Activated CD4-positive, alpha-beta memory T cell treated with anti-CD3 and anti-CD28 coated beads, Interleukin-2, amount 10 ng/mL, durations not matched to agents 7 days and 5 days (primary cell): ENCODE measurements at regions of chr1 and their contacts with region 1.

Region 1: DNA sequence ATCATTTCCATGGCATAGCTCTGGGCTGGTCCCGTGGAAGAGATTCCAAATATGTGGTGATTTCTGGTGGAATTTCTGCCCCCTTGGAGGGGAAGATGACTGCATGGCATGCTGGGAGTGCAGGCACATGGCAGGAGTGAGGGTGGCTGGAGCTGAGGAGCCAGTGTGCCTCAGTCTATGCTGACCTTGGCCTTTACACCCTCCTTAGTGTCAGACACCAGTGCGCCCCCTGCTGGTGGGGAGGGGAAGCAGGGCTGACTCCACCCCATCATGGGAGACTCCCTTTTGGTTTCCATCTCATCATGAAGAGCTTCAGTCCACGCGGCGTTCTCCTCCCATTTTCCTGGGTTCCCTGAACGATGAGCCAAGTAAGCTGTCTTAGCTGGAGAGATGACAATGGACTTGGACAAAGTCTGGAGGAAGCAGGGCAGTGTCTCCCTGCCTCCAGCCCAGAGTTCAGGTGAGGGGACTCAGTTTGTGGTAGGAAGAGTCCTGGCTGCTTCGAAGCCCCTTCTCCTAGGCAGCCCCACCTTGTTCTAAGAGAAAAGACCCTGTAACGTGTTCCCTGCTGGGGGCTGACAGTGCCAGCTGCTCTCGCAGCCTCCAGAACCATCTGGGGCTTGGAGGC is 10.3 kb downstream of the ALX3 start:
- DNase-seq: peak; percentile 78
- H3K4me3 Mint-ChIP-seq: no peak overlapping the region
- H3K27ac Mint-ChIP-seq: no peak overlapping the region
- H3K4me1 Mint-ChIP-seq: peaks cover 4% of the 10 kb centered on the region
- H3K27me3 Mint-ChIP-seq: no peaks in the 10 kb centered on the region

Region 2: GRCh38 chr1:109931189-109931731 is 128.9 kb before region 1 on chr1:
- CTCF ChIA-PET with region 1: no interaction called
- POLR2A ChIA-PET with region 1: no interaction called
- DNase-seq: no peak
- H3K4me3 Mint-ChIP-seq: no peak overlapping the region
- H3K27ac Mint-ChIP-seq: no peak overlapping the region
- H3K4me1 Mint-ChIP-seq: peaks cover 24% of the 10 kb centered on the region
- H3K27me3 Mint-ChIP-seq: peaks cover 9% of the 10 kb centered on the region

Region 3: GRCh38 chr1:109991400-109991925 is 68.7 kb before region 1 on chr1:
- CTCF ChIA-PET with region 1: no interaction called
- POLR2A ChIA-PET with region 1: no interaction called
- DNase-seq: no peak
- H3K4me3 Mint-ChIP-seq: no peak overlapping the region
- H3K27ac Mint-ChIP-seq: no peak overlapping the region
- H3K4me1 Mint-ChIP-seq: peaks cover 32% of the 10 kb centered on the region
- H3K27me3 Mint-ChIP-seq: no peaks in the 10 kb centered on the region

Region 4: GRCh38 chr1:110040548-110040947 is 19.6 kb before region 1 on chr1:
- CTCF ChIA-PET with region 1: interaction called, 18 read pairs
- POLR2A ChIA-PET with region 1: interaction called, 6 read pairs
- DNase-seq: no peak
- H3K4me3 Mint-ChIP-seq: no peak overlapping the region
- H3K27ac Mint-ChIP-seq: no peak overlapping the region
- H3K4me1 Mint-ChIP-seq: peaks cover 17% of the 10 kb centered on the region
- H3K27me3 Mint-ChIP-seq: no peaks in the 10 kb centered on the region

Region 5: GRCh38 chr1:110076789-110077500 is 16.8 kb after region 1 on chr1:
- CTCF ChIA-PET with region 1: interaction called, 16 read pairs
- POLR2A ChIA-PET with region 1: no interaction called
- DNase-seq: no peak
- H3K4me3 Mint-ChIP-seq: no peak overlapping the region
- H3K27ac Mint-ChIP-seq: no peak overlapping the region
- H3K4me1 Mint-ChIP-seq: no peaks in the 10 kb centered on the region
- H3K27me3 Mint-ChIP-seq: peaks cover 38% of the 10 kb centered on the region

Region 6: DNA sequence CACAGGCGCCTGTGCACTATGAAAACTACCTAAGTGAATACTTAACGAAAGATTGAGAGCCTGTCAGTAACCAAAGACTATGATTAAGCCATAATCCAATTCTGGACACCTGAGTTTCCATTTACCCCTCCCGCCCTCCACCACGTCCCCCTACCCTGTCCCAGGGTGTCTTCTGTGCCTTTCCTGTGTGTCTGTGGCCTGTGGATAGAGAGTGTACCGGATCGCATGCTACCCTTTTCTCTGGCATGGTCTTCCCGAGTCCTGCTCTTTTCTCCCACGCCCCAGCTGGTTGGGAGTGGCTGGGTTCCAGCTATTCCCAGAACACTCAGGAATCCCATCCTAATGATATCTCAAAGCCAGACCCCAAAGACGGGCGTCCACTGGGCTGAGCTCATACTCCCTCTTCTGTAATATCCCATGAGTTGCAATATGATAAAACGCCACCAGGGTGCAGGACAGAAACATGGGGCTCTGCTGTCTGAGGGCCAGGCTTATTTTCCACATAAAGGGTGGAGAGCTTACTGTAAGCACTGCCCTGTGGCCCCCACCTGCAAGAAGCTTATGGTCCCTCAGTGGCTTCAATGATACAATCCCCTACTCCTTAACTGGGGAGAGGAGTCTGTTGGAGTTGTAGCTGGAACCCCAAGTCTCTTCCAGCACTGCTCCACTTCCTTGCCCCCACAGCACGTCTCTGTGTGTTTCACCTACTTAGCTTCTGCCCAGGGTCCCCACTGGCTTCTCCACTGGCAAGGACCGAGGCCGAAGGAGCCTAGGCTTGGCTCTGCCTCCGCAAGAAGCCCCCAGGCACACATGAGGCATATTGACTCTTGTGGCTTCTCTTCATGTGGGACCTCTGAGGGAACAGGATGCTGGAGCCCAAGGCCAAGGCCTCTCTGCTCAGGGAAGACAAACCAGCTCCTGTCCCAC is 27.9 kb after region 1 on chr1:
- CTCF ChIA-PET with region 1: interaction called, 11 read pairs
- POLR2A ChIA-PET with region 1: no interaction called
- DNase-seq: peak; percentile 48
- H3K4me3 Mint-ChIP-seq: no peak overlapping the region
- H3K27ac Mint-ChIP-seq: no peak overlapping the region
- H3K4me1 Mint-ChIP-seq: peaks cover 10% of the 10 kb centered on the region
- H3K27me3 Mint-ChIP-seq: peaks cover 58% of the 10 kb centered on the region